ENCODE measurements at regions of chr21 and their contacts with region 1.

Region 1: DNA sequence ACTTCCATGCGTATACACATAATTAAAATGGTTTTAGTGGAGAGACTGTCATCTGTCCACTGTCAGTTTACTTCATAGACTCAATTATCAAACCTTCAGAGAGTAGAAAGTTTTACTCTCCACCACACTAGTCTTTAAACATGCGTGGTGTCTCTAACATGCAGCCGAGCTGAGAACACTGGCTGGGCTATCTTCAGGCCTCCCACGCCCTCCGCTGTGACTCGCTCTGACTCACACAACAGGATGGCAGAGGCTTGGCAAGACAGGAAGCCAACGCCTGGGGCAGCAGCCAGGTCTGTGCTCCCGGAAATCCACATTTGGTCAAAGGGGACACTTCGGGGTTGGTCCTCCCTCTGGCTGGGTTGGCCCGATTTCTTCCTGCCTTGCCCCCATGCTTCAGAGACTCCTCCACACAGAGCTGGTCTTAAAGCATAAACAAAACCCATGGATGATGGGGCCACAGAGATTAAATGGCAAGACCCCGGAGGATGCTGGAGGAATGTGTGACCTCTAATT is 22.7 kb upstream of the IFNGR2 start:
- DNase-seq: peak; percentile 98
- H3K4me3 Mint-ChIP-seq: peak overlapping the region; percentile 39
- H3K27ac Mint-ChIP-seq: peak overlapping the region; percentile 71
- H3K4me1 Mint-ChIP-seq: peaks cover 63% of the 10 kb centered on the region
- H3K27me3 Mint-ChIP-seq: peaks cover under 1% of the 10 kb centered on the region

Region 2: GRCh38 chr21:33205476-33205875 is 175.1 kb before region 1 on chr21:
- CTCF ChIA-PET with region 1: interaction called, 3 read pairs
- intact Hi-C with region 1: loop called (anchors 2 kb)
- DNase-seq: peak; percentile 42
- H3K4me3 Mint-ChIP-seq: no peak overlapping the region
- H3K27ac Mint-ChIP-seq: peak overlapping the region; percentile 5
- H3K4me1 Mint-ChIP-seq: peaks cover 39% of the 10 kb centered on the region
- H3K27me3 Mint-ChIP-seq: no peaks in the 10 kb centered on the region

Region 3: GRCh38 chr21:33259995-33260394 is 120.5 kb before region 1 on chr21:
- CTCF ChIA-PET with region 1: no interaction called
- intact Hi-C with region 1: loop called (anchors 1 kb)
- DNase-seq: no peak
- H3K4me3 Mint-ChIP-seq: no peak overlapping the region
- H3K27ac Mint-ChIP-seq: no peak overlapping the region
- H3K4me1 Mint-ChIP-seq: peaks cover 57% of the 10 kb centered on the region
- H3K27me3 Mint-ChIP-seq: no peaks in the 10 kb centered on the region

Region 4: GRCh38 chr21:33360881-33361602 is 19.5 kb before region 1 on chr21:
- CTCF ChIA-PET with region 1: interaction called, 28 read pairs
- intact Hi-C with region 1: loop called (anchors 1 kb)
- DNase-seq: peak; percentile 97
- H3K4me3 Mint-ChIP-seq: peak overlapping the region; percentile 86
- H3K27ac Mint-ChIP-seq: peak overlapping the region; percentile 95
- H3K4me1 Mint-ChIP-seq: peaks cover 17% of the 10 kb centered on the region
- H3K27me3 Mint-ChIP-seq: no peaks in the 10 kb centered on the region

Region 5: DNA sequence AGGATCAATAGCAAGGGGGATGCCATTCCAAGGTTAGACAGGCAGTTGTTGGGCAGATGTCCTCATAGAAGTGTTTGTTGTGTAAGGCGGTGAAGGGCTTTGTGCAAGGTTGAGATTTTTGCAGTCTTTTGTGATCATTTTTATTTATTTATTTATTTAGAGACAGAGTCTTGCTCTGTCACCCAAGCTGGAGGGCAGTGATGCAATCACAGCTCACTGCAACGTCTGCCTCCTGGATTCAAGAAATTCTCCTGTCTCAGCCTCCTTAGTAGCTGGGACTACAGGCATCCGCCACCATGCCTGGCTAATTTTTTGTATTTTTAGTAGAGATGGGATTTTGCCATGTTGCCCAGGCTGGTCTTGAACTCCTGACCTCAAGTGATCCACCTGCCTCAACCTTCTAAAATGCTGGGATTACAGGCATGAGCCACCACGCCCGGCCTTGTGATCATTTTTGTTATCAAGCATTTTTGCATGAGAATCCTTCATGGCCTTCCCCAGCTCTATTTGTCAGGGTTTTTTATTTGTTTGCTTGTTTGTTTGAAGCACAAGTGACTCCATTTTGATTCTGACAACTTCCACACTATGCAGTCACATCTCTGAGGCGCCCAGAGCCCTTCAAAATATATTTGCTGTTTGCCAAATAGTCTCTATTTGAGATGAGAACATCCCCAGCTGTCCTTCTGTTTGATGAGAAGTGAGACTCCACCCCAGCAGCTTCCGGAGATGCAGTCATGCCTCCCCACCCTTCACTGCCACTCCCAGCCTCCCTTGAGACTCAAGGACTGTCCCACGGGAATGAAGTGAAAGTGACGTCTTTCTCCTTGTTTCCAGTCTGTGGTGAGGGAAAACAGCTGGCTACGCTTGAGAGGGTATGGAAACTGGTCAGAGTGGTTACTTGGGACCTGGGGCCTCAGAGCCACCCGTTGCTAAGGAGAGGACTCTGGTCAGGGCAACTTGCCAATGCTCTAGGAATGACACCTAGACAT is 61.2 kb after region 1 on chr21:
- CTCF ChIA-PET with region 1: interaction called, 11 read pairs
- intact Hi-C with region 1: loop called (anchors 2 kb)
- DNase-seq: no peak
- H3K4me3 Mint-ChIP-seq: no peak overlapping the region
- H3K27ac Mint-ChIP-seq: no peak overlapping the region
- H3K4me1 Mint-ChIP-seq: peaks cover 4% of the 10 kb centered on the region
- H3K27me3 Mint-ChIP-seq: no peaks in the 10 kb centered on the region

Region 6: DNA sequence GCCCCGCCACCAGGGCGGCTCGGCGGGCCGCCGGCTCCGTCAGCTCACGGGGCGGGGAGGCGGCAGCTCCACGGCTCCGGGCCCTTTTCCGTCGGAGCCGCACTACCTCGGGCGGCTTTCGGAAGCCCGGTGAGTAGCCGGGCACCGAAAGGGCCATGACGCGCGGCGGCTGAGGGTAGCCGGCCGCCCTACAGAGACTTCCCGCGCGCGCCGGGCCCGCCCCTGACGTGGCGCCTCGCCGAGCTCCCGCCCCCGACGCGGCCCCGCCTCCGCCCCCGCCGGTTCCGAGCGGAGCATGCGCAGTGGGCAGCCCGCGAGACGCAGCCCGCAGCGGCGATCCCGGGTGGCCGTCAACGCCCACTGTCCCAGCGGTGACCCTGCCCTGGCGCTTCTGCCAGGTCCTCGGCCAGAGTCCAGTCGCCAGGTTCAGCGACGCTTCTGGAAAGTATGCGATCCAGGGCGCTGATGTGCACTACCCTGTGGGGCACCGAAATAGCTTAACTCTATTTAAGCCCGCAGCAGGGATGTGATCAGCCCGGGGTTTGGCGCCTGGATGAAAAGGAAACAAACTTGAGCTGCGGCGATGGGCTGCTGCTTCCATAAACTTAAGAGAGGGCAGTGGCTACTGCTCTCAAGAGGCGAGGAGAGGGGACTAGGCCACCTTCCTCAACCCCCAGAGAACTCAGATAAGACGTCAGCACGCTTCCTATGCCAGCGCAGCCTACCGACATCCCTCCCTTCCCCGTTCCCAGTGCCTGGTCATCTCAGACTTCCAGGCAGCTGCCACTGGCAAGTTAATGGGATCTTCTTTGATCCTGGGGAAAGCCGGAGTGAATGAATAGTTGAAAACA is 208.2 kb after region 1 on chr21 and contains the start of gene DONSON:
- CTCF ChIA-PET with region 1: no interaction called
- intact Hi-C with region 1: loop called (anchors 2 kb)
- DNase-seq: peak; percentile 82
- H3K4me3 Mint-ChIP-seq: peak within 1 kb of the TSS; percentile 91
- H3K27ac Mint-ChIP-seq: peak within 1 kb of the TSS; percentile 77
- H3K4me1 Mint-ChIP-seq: peaks cover 15% of the 10 kb centered on the region
- H3K27me3 Mint-ChIP-seq: no peaks in the 10 kb centered on the region
- total RNA-seq, gene DONSON: 35.6 to 42.4 TPM

Measured in activated naive CD4-positive, alpha-beta T cell treated with anti-CD3 and anti-CD28 coated beads for 36 hours (primary cell).